ENCODE measurements at regions of chr6 and their contacts with region 1.

Region 1: DNA sequence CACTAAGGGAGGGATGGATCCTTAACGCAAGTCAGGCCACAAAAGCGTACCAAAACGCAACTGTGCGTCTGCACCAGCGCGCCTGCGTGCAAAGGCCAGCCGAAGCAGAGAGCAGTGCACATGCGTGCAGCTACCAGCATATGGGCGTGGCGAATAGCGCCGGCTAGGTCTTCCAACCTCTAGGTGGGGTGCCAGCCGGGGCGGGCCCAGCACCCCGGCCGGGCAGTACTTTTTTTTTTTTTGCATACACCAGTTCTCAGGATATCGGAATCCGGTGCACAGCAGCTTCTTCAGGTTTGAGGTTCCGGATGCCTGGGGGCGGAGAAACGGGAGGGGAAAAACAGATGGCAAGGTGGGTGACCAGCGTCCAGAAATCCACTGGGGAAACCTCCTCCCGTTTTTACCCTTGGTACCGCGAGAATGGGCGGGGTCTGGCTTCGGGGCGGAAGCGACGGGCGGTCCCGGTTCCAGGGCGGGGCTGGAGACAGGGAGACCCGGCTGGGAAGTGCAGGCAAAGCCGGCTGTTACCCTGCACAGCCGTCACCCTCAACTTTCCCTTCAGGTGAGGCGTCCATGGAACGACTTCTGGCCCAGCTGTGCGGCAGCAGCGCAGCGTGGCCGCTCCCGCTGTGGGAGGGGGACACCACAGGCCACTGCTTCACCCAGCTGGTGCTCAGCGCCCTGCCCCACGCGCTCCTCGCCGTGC is at the start of gene ABCC10:
- DNase-seq: peak; percentile 97
- ATAC-seq: peak; percentile 97
- H3K4me3 Mint-ChIP-seq: peak within 1 kb of the TSS; percentile 94
- H3K27ac Mint-ChIP-seq: peak within 1 kb of the TSS; percentile 97
- H3K4me1 Mint-ChIP-seq: peaks cover 21% of the 10 kb centered on the region
- H3K27me3 Mint-ChIP-seq: no peaks in the 10 kb centered on the region
- total RNA-seq, gene ABCC10: 27.8 to 29.0 TPM

Region 2: DNA sequence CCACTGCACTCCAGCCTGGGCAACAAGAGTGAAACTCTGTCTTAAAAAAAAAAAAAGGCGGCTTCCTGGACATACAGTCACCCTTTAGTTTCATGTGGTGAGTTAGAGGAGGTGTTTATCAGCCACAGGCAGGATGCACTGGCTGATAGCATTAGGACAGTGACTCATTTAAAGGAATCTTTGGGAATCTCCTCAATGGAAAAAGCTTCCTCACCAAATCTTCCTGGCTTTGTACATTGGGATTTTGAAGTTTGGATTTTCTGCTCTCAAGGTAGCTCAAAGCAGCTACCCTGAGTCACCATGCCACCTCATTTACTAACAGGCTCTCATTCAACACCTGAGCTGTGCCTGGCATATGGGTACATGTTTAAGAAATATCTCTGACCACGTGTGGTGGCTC is 725.4 kb before region 1 on chr6:
- CTCF ChIA-PET with region 1: no interaction called
- POLR2A ChIA-PET with region 1: no interaction called
- intact Hi-C with region 1: no loop called
- DNase-seq: peak; percentile 11
- ATAC-seq: no peak
- H3K4me3 Mint-ChIP-seq: no peak overlapping the region
- H3K27ac Mint-ChIP-seq: no peak overlapping the region
- H3K4me1 Mint-ChIP-seq: no peaks in the 10 kb centered on the region
- H3K27me3 Mint-ChIP-seq: no peaks in the 10 kb centered on the region

Region 3: DNA sequence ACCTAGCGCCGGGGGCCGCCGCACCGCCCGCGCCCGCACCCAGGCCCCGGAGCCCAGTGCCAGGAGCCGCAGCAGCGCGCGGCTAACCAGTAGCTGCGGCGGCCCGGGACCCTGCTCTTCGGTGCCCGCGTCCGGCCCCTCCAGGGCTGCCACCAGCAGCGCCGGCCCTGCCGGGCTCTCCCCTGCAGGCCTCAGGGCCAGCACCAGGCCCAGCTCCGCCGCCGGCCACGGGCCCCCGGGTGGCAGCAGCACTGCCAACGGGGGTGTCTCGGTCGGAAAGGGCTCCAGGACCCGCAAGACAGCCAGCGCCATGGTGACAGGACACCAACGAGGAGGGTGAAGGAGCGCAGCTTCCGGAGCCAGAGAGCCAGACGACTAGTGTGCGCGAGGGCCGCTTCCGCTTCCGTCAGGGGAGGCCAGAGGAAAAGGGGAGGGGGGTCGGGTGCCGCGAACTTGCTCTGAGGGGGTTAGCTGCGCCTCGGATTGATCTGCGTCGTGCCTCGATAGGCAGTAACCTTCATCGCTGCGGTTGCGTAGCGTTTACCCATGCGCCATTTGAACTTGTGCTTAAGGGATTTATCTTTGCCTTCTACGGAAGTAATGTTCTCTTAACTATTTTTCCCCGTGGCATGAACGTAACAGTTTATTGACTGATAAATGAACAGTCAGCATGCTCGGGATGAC is 448.6 kb before region 1 on chr6 and contains the start of gene PEX6:
- CTCF ChIA-PET with region 1: no interaction called
- POLR2A ChIA-PET with region 1: interaction called, 3 read pairs
- intact Hi-C with region 1: loop called in 1 of 2 experiments (anchors 1 kb)
- DNase-seq: peak; percentile 98
- ATAC-seq: peak; percentile 95
- H3K4me3 Mint-ChIP-seq: peak within 1 kb of the TSS; percentile 89
- H3K27ac Mint-ChIP-seq: peak within 1 kb of the TSS; percentile 95
- H3K4me1 Mint-ChIP-seq: peaks cover 45% of the 10 kb centered on the region
- H3K27me3 Mint-ChIP-seq: no peaks in the 10 kb centered on the region
- total RNA-seq, gene PEX6: 10.7 to 14.6 TPM

Region 4: GRCh38 chr6:43181942-43182860 is 245.4 kb before region 1 on chr6 and contains the start of gene CUL9:
- CTCF ChIA-PET with region 1: no interaction called
- POLR2A ChIA-PET with region 1: no interaction called
- intact Hi-C with region 1: loop called in 1 of 2 experiments (anchors 1 kb)
- DNase-seq: peak; percentile 90
- ATAC-seq: peak; percentile 95
- H3K4me3 Mint-ChIP-seq: peak within 1 kb of the TSS; percentile 90
- H3K27ac Mint-ChIP-seq: peak within 1 kb of the TSS; percentile 91
- H3K4me1 Mint-ChIP-seq: peaks cover 46% of the 10 kb centered on the region
- H3K27me3 Mint-ChIP-seq: no peaks in the 10 kb centered on the region
- total RNA-seq, gene CUL9: 34.0 to 35.1 TPM

Region 5: DNA sequence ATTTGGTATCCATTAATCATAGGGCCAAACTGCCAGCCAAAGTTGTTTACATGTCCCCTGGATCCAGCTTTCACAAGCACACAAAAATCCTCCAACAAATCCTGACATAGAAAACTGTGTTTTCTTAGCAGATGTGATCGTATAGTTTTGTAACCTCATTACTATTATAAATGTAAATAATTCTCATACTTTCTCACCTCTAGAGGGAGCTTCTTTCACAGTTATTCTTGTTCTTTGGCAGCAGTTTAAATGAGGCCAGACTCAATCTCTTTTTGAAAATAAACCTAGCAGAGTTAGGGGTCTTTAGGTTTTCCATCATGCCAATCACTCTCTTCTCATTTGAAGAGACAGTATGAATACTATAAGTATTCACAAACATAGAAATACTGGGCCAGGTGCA is 41.1 kb before region 1 on chr6:
- CTCF ChIA-PET with region 1: interaction called, 3 read pairs
- POLR2A ChIA-PET with region 1: no interaction called
- intact Hi-C with region 1: loop called (anchors 1 to 5 kb)
- DNase-seq: no peak
- ATAC-seq: no peak
- H3K4me3 Mint-ChIP-seq: no peak overlapping the region
- H3K27ac Mint-ChIP-seq: peak overlapping the region; percentile 6
- H3K4me1 Mint-ChIP-seq: peaks cover 59% of the 10 kb centered on the region
- H3K27me3 Mint-ChIP-seq: peaks cover 2% of the 10 kb centered on the region

Region 6: GRCh38 chr6:43506667-43507471 is 79.3 kb after region 1 on chr6:
- CTCF ChIA-PET with region 1: interaction called, 3 read pairs
- POLR2A ChIA-PET with region 1: no interaction called
- intact Hi-C with region 1: loop called in 1 of 2 experiments (anchors 2 kb)
- DNase-seq: peak; percentile 89
- ATAC-seq: peak; percentile 83
- H3K4me3 Mint-ChIP-seq: no peak overlapping the region
- H3K27ac Mint-ChIP-seq: no peak overlapping the region
- H3K4me1 Mint-ChIP-seq: peaks cover 7% of the 10 kb centered on the region
- H3K27me3 Mint-ChIP-seq: peaks cover 12% of the 10 kb centered on the region

Region 7: DNA sequence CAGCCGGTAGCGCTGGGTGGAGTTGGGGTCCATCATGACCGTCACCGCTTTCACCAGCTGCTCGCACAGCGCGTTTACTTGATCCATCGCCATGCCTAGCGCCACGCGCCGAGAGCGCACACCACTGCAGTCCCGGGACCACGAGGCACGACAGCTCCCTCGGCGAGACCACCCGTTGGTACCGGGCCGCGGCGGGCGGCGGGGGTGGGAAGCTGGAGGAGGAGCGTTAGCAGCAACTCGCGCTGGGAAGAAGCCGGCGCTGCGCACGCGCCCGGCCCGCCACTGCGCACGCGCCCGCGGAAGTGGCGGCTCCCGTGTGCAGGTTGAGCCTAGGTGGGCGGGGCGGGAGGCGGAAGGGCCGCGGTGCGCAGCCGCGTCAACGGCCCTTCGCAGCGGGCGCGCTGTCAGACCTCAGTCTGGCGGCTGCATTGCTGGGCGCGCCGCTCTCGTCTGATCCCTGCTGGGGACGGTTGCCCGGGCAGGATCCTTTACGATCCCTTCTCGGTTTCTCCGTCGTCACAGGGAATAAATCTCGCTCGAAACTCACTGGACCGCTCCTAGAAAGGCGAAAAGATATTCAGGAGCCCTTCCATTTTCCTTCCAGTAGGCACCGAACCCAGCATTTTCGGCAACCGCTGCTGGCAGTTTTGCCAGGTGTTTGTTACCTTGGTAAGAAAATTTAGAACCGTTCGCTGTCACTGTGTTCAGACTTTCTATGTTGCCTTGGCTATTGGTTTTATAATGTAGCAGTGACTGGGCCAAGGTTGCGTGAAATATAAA is 148.4 kb after region 1 on chr6 and contains the starts of genes POLH and XPO5:
- CTCF ChIA-PET with region 1: no interaction called
- POLR2A ChIA-PET with region 1: no interaction called
- intact Hi-C with region 1: loop called in 1 of 2 experiments (anchors 1 kb)
- DNase-seq: peak; percentile 95
- ATAC-seq: peak; percentile 91
- H3K4me3 Mint-ChIP-seq: peak within 1 kb of the TSS; percentile 90
- H3K27ac Mint-ChIP-seq: peak within 1 kb of the TSS; percentile 86
- H3K4me1 Mint-ChIP-seq: peaks cover 44% of the 10 kb centered on the region
- H3K27me3 Mint-ChIP-seq: no peaks in the 10 kb centered on the region
- total RNA-seq, gene POLH: 35.2 to 37.9 TPM
- total RNA-seq, gene XPO5: 108 to 109 TPM